Activated CD4-positive, alpha-beta memory T cell treated with anti-CD3 and anti-CD28 coated beads, Interleukin-2, amount 10 ng/mL, durations not matched to agents 7 days and 5 days (primary cell): ENCODE measurements at regions of chr9 and their contacts with region 1.

Region 1: DNA sequence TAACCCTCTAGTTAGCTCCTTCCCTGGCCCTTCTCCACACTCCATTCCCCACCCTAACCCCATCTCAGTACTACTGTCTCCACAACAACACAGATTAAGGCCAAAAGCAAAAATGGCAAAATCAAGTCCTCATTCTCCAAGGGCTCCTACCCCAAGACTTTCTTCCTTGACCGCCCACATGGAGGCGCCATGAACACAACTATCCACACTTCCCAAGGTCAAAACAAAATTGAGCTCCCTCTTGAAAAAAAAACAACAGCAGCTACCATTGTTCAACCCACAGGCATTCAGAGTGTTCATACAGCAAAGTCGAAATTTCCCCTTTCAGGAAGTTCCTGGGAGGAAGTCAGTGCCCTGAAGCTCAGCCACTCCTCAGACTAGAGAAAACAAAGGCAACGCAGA is 54.4 kb downstream of the GNAQ start:
- DNase-seq: peak; percentile 69
- H3K4me3 Mint-ChIP-seq: no peak overlapping the region
- H3K27ac Mint-ChIP-seq: peak overlapping the region; percentile 77
- H3K4me1 Mint-ChIP-seq: peaks cover 51% of the 10 kb centered on the region
- H3K27me3 Mint-ChIP-seq: no peaks in the 10 kb centered on the region

Region 2: GRCh38 chr9:77926309-77926959 is 50.8 kb before region 1 on chr9:
- CTCF ChIA-PET with region 1: no interaction called
- POLR2A ChIA-PET with region 1: no interaction called
- DNase-seq: no peak
- H3K4me3 Mint-ChIP-seq: no peak overlapping the region
- H3K27ac Mint-ChIP-seq: no peak overlapping the region
- H3K4me1 Mint-ChIP-seq: peaks cover 19% of the 10 kb centered on the region
- H3K27me3 Mint-ChIP-seq: no peaks in the 10 kb centered on the region

Region 3: GRCh38 chr9:77991191-77991590 is 14.0 kb after region 1 on chr9:
- CTCF ChIA-PET with region 1: interaction called, 17 read pairs
- POLR2A ChIA-PET with region 1: interaction called, 5 read pairs
- DNase-seq: no peak
- H3K4me3 Mint-ChIP-seq: no peak overlapping the region
- H3K27ac Mint-ChIP-seq: no peak overlapping the region
- H3K4me1 Mint-ChIP-seq: peaks cover 9% of the 10 kb centered on the region
- H3K27me3 Mint-ChIP-seq: no peaks in the 10 kb centered on the region

Region 4: DNA sequence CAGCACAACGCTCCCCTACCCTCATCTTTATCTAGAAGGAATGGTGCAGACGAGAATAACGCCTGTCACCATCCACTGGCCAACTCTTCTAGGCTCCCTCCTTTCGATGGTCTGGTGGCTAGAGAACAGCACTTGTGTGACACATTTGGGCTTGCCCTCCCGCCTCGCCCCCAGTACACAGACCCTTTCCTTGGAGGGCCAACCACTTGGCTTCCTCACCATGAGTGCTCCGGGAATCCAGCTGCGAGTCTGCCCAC is 53.0 kb after region 1 on chr9:
- CTCF ChIA-PET with region 1: interaction called, 69 read pairs
- POLR2A ChIA-PET with region 1: interaction called, 14 read pairs
- DNase-seq: peak; percentile 35
- H3K4me3 Mint-ChIP-seq: peak overlapping the region; percentile 91
- H3K27ac Mint-ChIP-seq: peak overlapping the region; percentile 78
- H3K4me1 Mint-ChIP-seq: peaks cover 53% of the 10 kb centered on the region
- H3K27me3 Mint-ChIP-seq: no peaks in the 10 kb centered on the region

Region 5: GRCh38 chr9:78035383-78035993 is 58.3 kb after region 1 on chr9:
- CTCF ChIA-PET with region 1: interaction called, 69 read pairs
- POLR2A ChIA-PET with region 1: interaction called, 14 read pairs
- DNase-seq: peak; percentile 61
- H3K4me3 Mint-ChIP-seq: no peak overlapping the region
- H3K27ac Mint-ChIP-seq: no peak overlapping the region
- H3K4me1 Mint-ChIP-seq: peaks cover 34% of the 10 kb centered on the region
- H3K27me3 Mint-ChIP-seq: peaks cover 2% of the 10 kb centered on the region

Region 6: DNA sequence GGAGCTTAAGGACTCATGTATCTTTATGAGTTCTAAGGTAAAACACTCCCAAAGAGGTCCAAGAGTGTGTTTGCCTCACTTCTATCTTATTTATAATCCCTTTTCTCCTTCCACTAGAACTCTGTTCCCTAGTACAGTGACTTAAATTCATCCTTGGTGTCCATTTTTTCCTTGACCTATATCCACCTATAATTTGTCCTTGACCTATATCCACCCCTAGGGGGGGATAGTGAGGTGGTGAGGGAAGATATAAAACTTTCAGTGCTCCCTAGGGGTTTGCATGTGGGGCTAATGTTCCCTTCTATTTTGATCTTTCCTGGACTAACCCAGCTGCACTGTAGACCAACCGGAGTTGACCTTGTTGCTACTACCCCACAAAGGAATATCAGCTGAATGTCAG is 137.9 kb after region 1 on chr9:
- CTCF ChIA-PET with region 1: interaction called, 77 read pairs
- POLR2A ChIA-PET with region 1: interaction called, 12 read pairs
- DNase-seq: no peak
- H3K4me3 Mint-ChIP-seq: no peak overlapping the region
- H3K27ac Mint-ChIP-seq: no peak overlapping the region
- H3K4me1 Mint-ChIP-seq: peaks cover 45% of the 10 kb centered on the region
- H3K27me3 Mint-ChIP-seq: no peaks in the 10 kb centered on the region

Region 7: GRCh38 chr9:78121488-78121887 is 144.3 kb after region 1 on chr9:
- CTCF ChIA-PET with region 1: interaction called, 77 read pairs
- POLR2A ChIA-PET with region 1: interaction called, 12 read pairs
- DNase-seq: peak; percentile 64
- H3K4me3 Mint-ChIP-seq: no peak overlapping the region
- H3K27ac Mint-ChIP-seq: no peak overlapping the region
- H3K4me1 Mint-ChIP-seq: peaks cover 40% of the 10 kb centered on the region
- H3K27me3 Mint-ChIP-seq: peaks cover 1% of the 10 kb centered on the region

Region 8: GRCh38 chr9:78213712-78214111 is 236.5 kb after region 1 on chr9:
- CTCF ChIA-PET with region 1: interaction called, 11 read pairs
- POLR2A ChIA-PET with region 1: no interaction called
- DNase-seq: no peak
- H3K4me3 Mint-ChIP-seq: no peak overlapping the region
- H3K27ac Mint-ChIP-seq: no peak overlapping the region
- H3K4me1 Mint-ChIP-seq: peaks cover 30% of the 10 kb centered on the region
- H3K27me3 Mint-ChIP-seq: no peaks in the 10 kb centered on the region